Activated CD4-positive, alpha-beta T cell treated with anti-CD3 and anti-CD28 coated beads, Interleukin-2, amount 10 ng/mL, durations not matched to agents 7 days and 5 days (primary cell): ENCODE measurements at regions of chr12 and their contacts with region 1.

Region 1: DNA sequence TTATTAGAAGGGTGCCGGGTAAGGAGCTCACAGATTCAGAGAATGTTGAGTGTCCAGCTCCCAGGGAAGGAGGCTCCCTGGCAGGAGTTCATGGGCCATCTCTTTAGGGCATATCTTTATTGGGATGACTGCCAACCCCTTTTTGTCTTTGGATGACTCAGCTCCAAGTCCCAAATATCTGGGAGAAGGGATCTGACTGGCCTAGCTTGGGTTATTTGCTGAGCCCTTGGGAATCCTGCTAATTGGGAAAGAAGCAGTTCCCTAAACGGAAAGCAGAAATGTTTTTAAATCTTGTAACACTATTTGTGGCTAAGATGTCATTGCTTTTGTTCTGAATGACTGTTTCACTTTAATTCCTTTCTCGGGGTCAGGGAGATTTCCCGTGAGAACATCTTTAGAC is 12.6 kb downstream of the DDX55 start:
- DNase-seq: no peak
- H3K4me3 Mint-ChIP-seq: no peak overlapping the region
- H3K27ac Mint-ChIP-seq: no peak overlapping the region
- H3K4me1 Mint-ChIP-seq: peaks cover 4% of the 10 kb centered on the region
- H3K27me3 Mint-ChIP-seq: no peaks in the 10 kb centered on the region

Region 2: GRCh38 chr12:123428591-123428990 is 185.9 kb before region 1 on chr12:
- CTCF ChIA-PET with region 1: no interaction called
- POLR2A ChIA-PET with region 1: interaction called, 15 read pairs
- DNase-seq: no peak
- H3K4me3 Mint-ChIP-seq: no peak overlapping the region
- H3K27ac Mint-ChIP-seq: peak overlapping the region; percentile 87
- H3K4me1 Mint-ChIP-seq: peaks cover 40% of the 10 kb centered on the region
- H3K27me3 Mint-ChIP-seq: no peaks in the 10 kb centered on the region

Region 3: GRCh38 chr12:123601602-123602489 is 12.7 kb before region 1 on chr12 and contains the start of gene DDX55:
- CTCF ChIA-PET with region 1: interaction called, 10 read pairs
- POLR2A ChIA-PET with region 1: no interaction called
- DNase-seq: peak; percentile 87
- H3K4me3 Mint-ChIP-seq: peak within 1 kb of the TSS; percentile 80
- H3K27ac Mint-ChIP-seq: peak within 1 kb of the TSS; percentile 86
- H3K4me1 Mint-ChIP-seq: peaks cover 47% of the 10 kb centered on the region
- H3K27me3 Mint-ChIP-seq: no peaks in the 10 kb centered on the region
- total RNA-seq, gene DDX55: 35.9 to 38.3 TPM

Region 4: DNA sequence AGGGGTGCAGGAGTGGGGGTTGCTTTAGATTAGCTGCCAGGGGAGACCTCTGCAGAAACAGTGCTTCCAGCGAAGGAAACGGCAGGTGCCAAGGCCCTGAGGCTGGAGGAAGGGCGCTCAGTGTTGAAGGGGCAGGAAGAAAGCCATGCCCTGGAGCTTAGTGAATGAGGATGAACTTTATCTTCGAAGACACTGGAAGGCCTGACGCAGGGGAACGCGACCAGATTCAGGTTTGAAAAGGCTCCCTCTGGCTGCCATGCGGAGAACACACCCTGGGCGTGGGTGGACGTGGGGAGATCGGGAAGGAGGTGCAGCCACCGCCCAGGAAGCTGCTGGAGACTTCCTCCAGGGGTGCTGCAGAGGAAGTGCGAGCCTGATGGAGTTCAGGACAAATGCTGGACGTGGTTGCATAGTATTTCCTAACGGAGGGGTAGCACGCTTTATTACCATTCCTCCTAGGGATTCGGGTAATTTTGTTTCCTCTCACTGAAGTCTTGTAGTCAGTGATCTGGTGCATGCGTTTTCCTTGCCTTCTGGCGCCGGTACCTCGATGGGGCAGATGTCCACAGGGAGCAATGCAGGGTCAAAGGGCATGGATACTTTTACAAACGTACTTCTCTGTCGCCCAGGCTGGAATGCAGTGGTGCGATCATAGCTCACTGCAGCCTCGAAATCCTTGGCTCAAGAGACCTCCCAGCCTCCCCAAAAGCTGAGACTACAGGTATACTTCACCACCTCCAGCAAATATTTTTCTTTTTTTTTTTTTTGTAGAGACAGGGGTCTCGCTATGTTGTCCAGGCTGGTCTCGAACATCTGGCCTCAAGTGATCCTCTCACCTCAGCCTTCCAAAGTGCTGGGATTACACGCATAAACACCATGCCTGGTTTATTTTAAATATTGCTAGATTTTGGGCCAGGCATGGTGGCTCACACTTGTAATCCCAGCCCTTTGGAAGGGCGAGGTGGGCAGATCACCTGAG is 1326.3 kb after region 1 on chr12:
- CTCF ChIA-PET with region 1: no interaction called
- POLR2A ChIA-PET with region 1: no interaction called
- DNase-seq: peak; percentile 89
- H3K4me3 Mint-ChIP-seq: no peak overlapping the region
- H3K27ac Mint-ChIP-seq: no peak overlapping the region
- H3K4me1 Mint-ChIP-seq: peaks cover 26% of the 10 kb centered on the region
- H3K27me3 Mint-ChIP-seq: no peaks in the 10 kb centered on the region